ENCODE measurements at regions of chr9 and their contacts with region 1.

Region 1: DNA sequence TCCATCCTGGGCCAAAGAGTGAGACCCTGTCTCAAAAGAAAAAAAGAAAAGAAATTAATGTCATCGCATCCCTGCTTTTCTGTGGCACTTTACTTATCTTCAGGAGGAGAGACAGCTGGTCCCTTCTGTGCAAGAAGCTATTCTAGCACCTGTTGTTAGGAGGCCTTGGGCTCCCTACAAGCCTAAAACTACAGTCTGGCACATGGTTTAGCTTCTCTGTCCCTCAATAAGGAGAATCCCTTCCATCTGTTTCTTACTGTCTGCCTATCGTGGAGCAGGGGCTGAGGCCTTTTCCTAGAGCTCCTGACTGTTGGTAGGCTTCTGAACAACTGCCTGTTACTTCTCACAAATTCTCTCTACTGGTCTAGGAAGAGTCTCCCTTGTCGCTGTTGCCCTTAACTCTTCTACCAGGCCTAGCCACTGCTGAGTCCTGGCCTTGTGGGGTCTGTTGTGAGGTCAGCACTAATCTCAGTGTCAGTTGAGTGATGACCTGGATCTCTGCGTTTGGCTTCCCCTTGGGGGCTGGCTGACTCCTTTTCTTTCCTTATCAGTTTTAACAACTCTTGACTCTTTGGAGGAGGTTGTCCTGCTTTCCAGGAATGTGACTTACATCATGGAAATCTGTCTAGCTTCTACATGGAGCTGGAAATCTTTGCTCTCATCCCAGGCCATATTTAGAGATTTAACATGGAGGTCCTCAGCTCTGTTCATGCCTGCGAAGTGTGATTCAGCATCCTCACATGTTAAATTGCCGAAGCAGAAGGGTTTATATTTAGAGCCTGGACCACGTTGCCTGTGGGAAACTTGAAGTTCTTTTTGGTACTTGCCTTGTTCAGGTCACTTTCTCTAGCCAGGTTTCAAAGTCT is 5.7 kb upstream of the GARNL3 start:
- DNase-seq: peak in 1 of 2 donors; percentile 75
- H3K4me3 ChIP-seq: no peak overlapping the region
- H3K27ac ChIP-seq: peak overlapping the region; percentile 87 to 91
- H3K4me1 ChIP-seq: peaks cover 10 to 36% of the 10 kb centered on the region in 2 donors
- H3K27me3 ChIP-seq: no peaks in the 10 kb centered on the region
- CTCF ChIP-seq: no peak

Region 2: GRCh38 chr9:126980231-126980630 is 278.6 kb before region 1 on chr9:
- intact Hi-C with region 1: no loop called
- DNase-seq: no peak
- H3K4me3 ChIP-seq: no peak overlapping the region
- H3K27ac ChIP-seq: no peak overlapping the region
- H3K4me1 ChIP-seq: no peaks in the 10 kb centered on the region
- H3K27me3 ChIP-seq: no peaks in the 10 kb centered on the region
- CTCF ChIP-seq: no peak

Region 3: GRCh38 chr9:127311239-127311741 is 52.5 kb after region 1 on chr9:
- intact Hi-C with region 1: loop called (anchors 5 kb)
- DNase-seq: peak in 1 of 2 donors; percentile 87
- H3K4me3 ChIP-seq: no peak overlapping the region
- H3K27ac ChIP-seq: peak overlapping the region; percentile 78 to 80
- H3K4me1 ChIP-seq: peaks cover 4 to 48% of the 10 kb centered on the region in 2 donors
- H3K27me3 ChIP-seq: no peaks in the 10 kb centered on the region
- CTCF ChIP-seq: peak in 2 of 3 experiments; percentile 38 to 48

Region 4: GRCh38 chr9:127330501-127330900 is 71.7 kb after region 1 on chr9:
- intact Hi-C with region 1: no loop called
- DNase-seq: no peak
- H3K4me3 ChIP-seq: no peak overlapping the region
- H3K27ac ChIP-seq: no peak overlapping the region
- H3K4me1 ChIP-seq: no peaks in the 10 kb centered on the region
- H3K27me3 ChIP-seq: no peaks in the 10 kb centered on the region
- CTCF ChIP-seq: no peak

Region 5: GRCh38 chr9:127360829-127361228 is 102.0 kb after region 1 on chr9:
- intact Hi-C with region 1: loop called (anchors 1 kb)
- DNase-seq: no peak
- H3K4me3 ChIP-seq: no peak overlapping the region
- H3K27ac ChIP-seq: peak overlapping the region; percentile 80 to 84
- H3K4me1 ChIP-seq: peaks cover 5 to 26% of the 10 kb centered on the region in 2 donors
- H3K27me3 ChIP-seq: no peaks in the 10 kb centered on the region
- CTCF ChIP-seq: peak in 1 of 3 experiments; percentile 12

Region 6: GRCh38 chr9:127676636-127677035 is 417.8 kb after region 1 on chr9:
- intact Hi-C with region 1: no loop called
- DNase-seq: no peak
- H3K4me3 ChIP-seq: no peak overlapping the region
- H3K27ac ChIP-seq: no peak overlapping the region
- H3K4me1 ChIP-seq: no peaks in the 10 kb centered on the region
- H3K27me3 ChIP-seq: no peaks in the 10 kb centered on the region
- CTCF ChIP-seq: no peak

Measured in ascending aorta (tissue), 2 donors.